ENCODE measurements at regions of chr4 and their contacts with region 1.

Region 1: GRCh38 chr4:176340871-176341685 is 21.3 kb downstream of the SPCS3 start:
- DNase-seq: no peak
- ATAC-seq: peak; percentile 38

Region 2: DNA sequence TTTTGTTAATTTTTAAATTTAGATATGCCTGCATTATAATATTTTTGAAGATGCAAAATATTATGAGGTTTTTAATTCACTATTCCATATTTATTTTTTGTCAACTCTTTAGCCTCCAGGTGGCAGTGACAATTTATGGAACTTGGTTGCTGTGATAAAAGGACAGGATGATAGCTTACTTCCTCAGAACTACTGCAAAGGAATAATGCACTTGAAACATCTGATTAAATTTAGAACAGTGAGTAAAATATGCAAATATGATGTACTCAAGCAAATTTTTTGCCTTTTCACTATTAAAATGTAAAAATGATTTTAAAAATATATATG is 190.8 kb before region 1 on chr4:
- intact Hi-C with region 1: loop called (anchors 1 kb)
- DNase-seq: no peak
- ATAC-seq: peak; percentile 52

Measured in left ventricle myocardium superior (tissue), 1 donor.